ENCODE measurements at regions of chr10 and their contacts with region 1.

Region 1: GRCh38 chr10:58414270-58415041 is 29.2 kb downstream of the TFAM start:
- DNase-seq: no peak
- H3K4me3 ChIP-seq: no peak overlapping the region
- H3K27ac ChIP-seq: no peak overlapping the region
- H3K4me1 ChIP-seq: peaks cover 0 to 6% (median 0%) of the 10 kb centered on the region in 4 experiments; a peak in 2 of 7 replicates
- H3K27me3 ChIP-seq: no peaks in the 10 kb centered on the region
- CTCF ChIP-seq: peak in 2 of 3 experiments; percentile 37 to 42; a peak in 2 of 4 replicates
- EP300 ChIP-seq: no peak
- POLR2A ChIP-seq: no peak
- RAD21 ChIP-seq: peak; percentile 80 to 82

Region 2: DNA sequence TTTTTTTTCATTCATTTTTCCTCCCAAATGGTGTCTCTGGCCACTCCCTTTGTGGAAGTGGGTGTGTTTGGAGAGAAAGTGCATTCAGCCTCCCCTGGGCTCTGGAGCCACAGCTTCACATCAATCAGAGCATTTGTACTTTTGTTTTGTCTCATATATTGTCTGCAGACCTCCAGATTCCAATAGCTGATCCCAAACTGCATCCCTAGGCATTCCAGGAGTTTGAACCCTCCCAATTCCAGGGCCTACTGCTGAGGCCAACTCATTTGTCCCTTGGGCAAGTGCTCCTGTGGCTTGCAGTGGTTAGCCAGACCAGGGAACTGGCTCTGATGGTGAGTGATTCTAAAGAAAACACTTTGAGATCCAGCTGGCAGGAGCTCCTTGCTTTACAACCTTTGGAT is 310.1 kb before region 1 on chr10:
- CTCF ChIA-PET with region 1: no interaction called
- POLR2A ChIA-PET with region 1: no interaction called
- DNase-seq: no peak
- H3K4me3 ChIP-seq: no peak overlapping the region
- H3K27ac ChIP-seq: no peak overlapping the region
- H3K4me1 ChIP-seq: no peaks in the 10 kb centered on the region
- H3K27me3 ChIP-seq: no peaks in the 10 kb centered on the region
- CTCF ChIP-seq: no peak
- EP300 ChIP-seq: no peak
- POLR2A ChIP-seq: no peak
- RAD21 ChIP-seq: no peak

Region 3: GRCh38 chr10:58399410-58399809 is 15.0 kb before region 1 on chr10:
- CTCF ChIA-PET with region 1: interaction called, 21 read pairs
- POLR2A ChIA-PET with region 1: interaction called, 3 read pairs
- DNase-seq: no peak
- H3K4me3 ChIP-seq: no peak overlapping the region
- H3K27ac ChIP-seq: no peak overlapping the region
- H3K4me1 ChIP-seq: no peaks in the 10 kb centered on the region
- H3K27me3 ChIP-seq: no peaks in the 10 kb centered on the region
- CTCF ChIP-seq: no peak
- EP300 ChIP-seq: no peak
- POLR2A ChIP-seq: no peak
- RAD21 ChIP-seq: no peak

Region 4: GRCh38 chr10:58431903-58432302 is 17.4 kb after region 1 on chr10:
- CTCF ChIA-PET with region 1: interaction called, 15 read pairs
- POLR2A ChIA-PET with region 1: no interaction called
- DNase-seq: no peak
- H3K4me3 ChIP-seq: no peak overlapping the region
- H3K27ac ChIP-seq: no peak overlapping the region
- H3K4me1 ChIP-seq: peaks cover 0 to 2% (median 0%) of the 10 kb centered on the region in 4 experiments; a peak in 2 of 7 replicates
- H3K27me3 ChIP-seq: no peaks in the 10 kb centered on the region
- CTCF ChIP-seq: no peak
- EP300 ChIP-seq: no peak
- POLR2A ChIP-seq: no peak
- RAD21 ChIP-seq: no peak

Region 5: DNA sequence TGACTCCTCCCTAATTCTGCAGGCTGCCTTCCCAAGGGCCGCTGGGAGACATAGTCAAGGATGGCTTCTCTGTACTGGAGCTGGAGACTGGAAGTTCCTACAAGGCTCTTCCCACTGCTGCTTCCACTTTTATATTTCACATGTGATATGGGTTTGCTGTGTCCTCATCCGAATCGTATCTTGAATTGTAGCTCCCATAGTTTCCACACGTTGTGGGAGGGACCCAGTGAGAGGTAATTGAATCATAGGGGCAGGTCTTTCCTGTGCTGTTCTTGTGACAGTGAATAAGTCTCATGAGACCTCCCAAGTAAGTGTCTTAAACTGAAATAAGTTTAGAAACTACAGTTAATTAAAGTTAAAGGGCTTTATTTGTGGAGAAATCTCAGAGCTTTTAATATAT is 51.2 kb after region 1 on chr10:
- CTCF ChIA-PET with region 1: interaction called, 10 read pairs
- POLR2A ChIA-PET with region 1: no interaction called
- DNase-seq: no peak
- H3K4me3 ChIP-seq: no peak overlapping the region
- H3K27ac ChIP-seq: no peak overlapping the region
- H3K4me1 ChIP-seq: no peaks in the 10 kb centered on the region
- H3K27me3 ChIP-seq: no peaks in the 10 kb centered on the region
- CTCF ChIP-seq: no peak
- EP300 ChIP-seq: no peak
- POLR2A ChIP-seq: no peak
- RAD21 ChIP-seq: no peak

Region 6: DNA sequence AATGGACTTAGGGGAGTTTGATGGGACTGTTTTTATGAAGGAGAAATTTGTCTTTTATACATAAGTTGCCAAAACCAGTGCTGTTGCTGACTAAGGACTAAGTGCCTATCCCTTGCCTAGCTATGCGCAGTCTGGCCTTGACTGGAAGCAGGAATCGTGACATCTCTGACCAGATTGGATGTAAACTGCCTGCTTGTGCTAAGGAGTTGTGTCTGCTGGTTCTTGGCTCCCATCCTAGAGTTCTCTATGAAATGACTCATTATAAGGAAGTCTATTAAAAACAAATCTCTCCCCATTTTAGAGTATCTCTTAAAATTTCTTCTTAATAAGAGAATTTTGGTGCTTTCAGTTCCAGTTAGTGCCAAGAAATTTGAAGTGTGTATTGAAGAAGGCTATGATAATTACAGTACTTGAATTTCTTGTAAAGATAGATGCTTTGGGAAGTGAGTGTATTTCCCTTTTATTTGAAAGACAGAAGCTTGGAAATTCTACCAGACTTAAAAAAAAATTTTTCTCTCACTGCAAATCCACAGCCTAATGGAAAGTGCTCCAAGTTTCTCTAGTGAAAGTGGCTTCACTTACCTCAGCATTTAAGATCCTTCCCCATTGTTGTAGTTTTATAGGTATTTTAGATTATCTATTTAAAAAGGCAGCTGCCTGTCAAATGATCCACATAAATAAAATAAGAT is 175.8 kb after region 1 on chr10:
- CTCF ChIA-PET with region 1: interaction called, 25 read pairs
- POLR2A ChIA-PET with region 1: no interaction called
- DNase-seq: no peak
- H3K4me3 ChIP-seq: no peak overlapping the region
- H3K27ac ChIP-seq: no peak overlapping the region
- H3K4me1 ChIP-seq: no peaks in the 10 kb centered on the region
- H3K27me3 ChIP-seq: no peaks in the 10 kb centered on the region
- CTCF ChIP-seq: no peak
- EP300 ChIP-seq: no peak
- POLR2A ChIP-seq: no peak
- RAD21 ChIP-seq: no peak